ENCODE measurements at regions of chr5 and their contacts with region 1.

Region 1: DNA sequence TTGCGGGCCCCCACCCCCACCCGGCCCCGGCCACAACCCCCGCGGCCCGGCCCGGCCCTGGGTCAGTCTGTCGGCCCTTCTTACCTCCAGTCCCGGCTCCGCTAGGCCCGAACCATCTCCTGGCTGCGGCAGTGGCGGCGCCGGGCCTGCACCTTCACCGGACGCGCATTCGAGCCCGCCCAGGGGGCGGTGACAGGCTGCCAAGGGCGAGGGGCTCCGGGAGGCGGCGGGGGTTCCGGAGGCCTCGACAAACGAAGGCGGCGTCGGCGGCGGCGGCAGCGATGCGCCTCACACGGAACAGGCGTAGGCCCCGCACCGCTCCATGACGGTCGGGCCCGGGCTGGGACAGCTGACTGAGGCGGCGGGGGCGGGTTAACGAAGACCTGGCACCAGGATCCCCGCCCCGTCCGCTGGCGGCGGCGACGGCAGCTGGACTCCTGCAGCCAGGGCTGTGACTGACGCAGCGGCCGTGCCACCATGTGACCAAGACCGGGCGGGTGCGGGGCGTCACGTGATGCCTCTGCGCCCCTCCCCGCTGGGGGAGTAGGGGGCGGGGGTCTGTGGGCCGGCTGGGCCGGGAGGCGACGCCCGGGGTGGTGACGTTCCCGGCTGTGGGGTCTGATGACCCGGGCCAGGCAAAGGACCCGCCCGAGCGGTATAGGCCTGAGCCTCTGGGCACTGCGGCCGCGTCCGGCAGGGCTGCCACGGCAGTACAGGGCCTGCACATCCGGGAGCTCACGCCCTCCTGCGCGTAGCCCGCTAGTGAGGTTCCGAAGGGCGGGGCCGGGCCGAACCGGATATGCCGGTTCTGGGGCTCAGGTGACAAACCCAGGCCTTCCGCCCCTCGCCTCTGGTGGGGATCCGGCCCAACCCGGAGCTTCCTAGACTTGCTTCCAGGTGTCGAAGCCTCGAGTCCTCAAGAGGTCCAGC is at the start of gene AFF4:
- DNase-seq: peak; percentile 98
- H3K4me3 ChIP-seq: peak within 1 kb of the TSS; percentile 82 to 100 (median 100)
- H3K27ac ChIP-seq: peak within 1 kb of the TSS; percentile 95 to 100 (median 100)
- H3K4me1 ChIP-seq: peaks cover 0 to 41% (median 27%) of the 10 kb centered on the region in 4 donors
- H3K27me3 ChIP-seq: no peaks in the 10 kb centered on the region
- CTCF ChIP-seq: no peak
- EP300 ChIP-seq: peak in 2 of 4 donors; percentile 71 to 73
- POLR2A ChIP-seq: peak; percentile 95 to 96
- total RNA-seq, gene AFF4: 52.4 to 74.0 (median 66.7) TPM

Region 2: DNA sequence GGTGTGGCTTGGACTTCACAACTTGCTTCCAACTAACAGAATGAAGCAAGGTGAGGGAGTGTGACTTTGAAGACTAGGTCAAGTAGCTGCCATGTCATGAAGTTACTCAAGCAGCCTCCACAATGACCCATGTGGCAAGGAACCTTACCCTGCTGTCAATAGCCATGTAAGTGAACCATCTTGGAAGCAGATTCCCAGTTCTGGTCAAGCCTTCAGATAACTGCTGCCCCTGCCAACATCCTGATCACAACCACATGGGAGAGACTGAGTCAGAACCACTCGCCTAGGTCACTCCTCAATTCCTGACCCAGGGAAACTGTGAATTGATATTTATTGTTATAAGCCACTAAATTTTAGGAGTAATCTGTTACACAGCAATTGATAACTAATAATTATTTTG is 52.0 kb after region 1 on chr5:
- intact Hi-C with region 1: no loop called
- DNase-seq: no peak
- H3K4me3 ChIP-seq: no peak overlapping the region
- H3K27ac ChIP-seq: no peak overlapping the region
- H3K4me1 ChIP-seq: no peaks in the 10 kb centered on the region
- H3K27me3 ChIP-seq: no peaks in the 10 kb centered on the region
- CTCF ChIP-seq: no peak
- EP300 ChIP-seq: no peak
- POLR2A ChIP-seq: no peak

Region 3: GRCh38 chr5:133025804-133026663 is 62.6 kb after region 1 on chr5 and contains the start of gene ZCCHC10:
- intact Hi-C with region 1: loop called (anchors 1 kb)
- DNase-seq: peak; percentile 96
- H3K4me3 ChIP-seq: peak within 1 kb of the TSS; percentile 79 to 95 (median 85)
- H3K27ac ChIP-seq: peak within 1 kb of the TSS; percentile 90 to 98 (median 97)
- H3K4me1 ChIP-seq: peaks cover 0 to 22% (median 11%) of the 10 kb centered on the region in 4 donors
- H3K27me3 ChIP-seq: no peaks in the 10 kb centered on the region
- CTCF ChIP-seq: no peak
- EP300 ChIP-seq: no peak
- POLR2A ChIP-seq: peak; percentile 32 to 59
- total RNA-seq, gene ZCCHC10: 15.0 to 18.9 (median 17.0) TPM